ENCODE measurements at regions of chr19 and their contacts with region 1.

Region 1: DNA sequence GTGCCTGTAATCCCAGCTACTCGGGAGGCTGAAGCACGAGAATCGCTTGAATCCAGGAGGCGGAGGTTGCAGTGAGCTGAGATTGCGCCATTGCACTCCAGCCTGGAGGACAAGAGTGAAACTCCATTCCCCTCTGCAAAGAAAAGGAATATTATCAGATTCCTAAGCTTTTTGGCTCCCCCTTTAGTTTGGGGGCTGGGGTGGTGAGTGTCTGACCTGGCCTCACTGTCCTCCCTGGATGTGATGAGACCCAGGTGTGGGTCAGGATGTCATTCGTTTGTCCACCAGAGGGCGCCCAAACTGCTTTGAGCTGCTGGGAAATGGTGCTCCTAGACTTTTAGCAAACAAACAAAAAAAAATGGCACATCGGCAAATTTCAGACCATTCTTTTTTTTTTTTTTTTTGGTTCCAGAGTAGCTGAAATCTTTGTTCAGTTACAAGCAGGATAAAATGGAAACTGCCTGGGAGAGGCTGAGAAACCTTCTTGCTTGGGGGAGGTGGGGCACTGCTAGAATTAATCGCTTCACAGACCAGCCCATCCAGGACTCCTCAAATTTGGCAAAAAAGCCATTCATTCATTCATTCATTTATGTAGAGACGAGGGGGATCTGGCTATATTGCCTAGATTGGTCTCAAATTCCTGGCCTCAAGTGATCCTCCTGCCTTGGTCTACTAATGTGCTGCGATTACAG is 29.4 kb downstream of the SPC24 start:
- DNase-seq: peak; percentile 53 to 84 (median 64)
- H3K4me3 ChIP-seq: no peak overlapping the region
- H3K4me3 Mint-ChIP-seq: no peak overlapping the region
- H3K27ac ChIP-seq: no peak overlapping the region
- H3K27ac Mint-ChIP-seq: peak overlapping the region in 5 of 8 donors; percentile 31 to 54 (median 47)
- H3K4me1 ChIP-seq: peaks cover 3% of the 10 kb centered on the region
- H3K4me1 Mint-ChIP-seq: peaks cover 0 to 4% (median 1%) of the 10 kb centered on the region in 3 donors
- H3K27me3 ChIP-seq: no peaks in the 10 kb centered on the region
- H3K27me3 Mint-ChIP-seq: no peaks in the 10 kb centered on the region

Region 2: DNA sequence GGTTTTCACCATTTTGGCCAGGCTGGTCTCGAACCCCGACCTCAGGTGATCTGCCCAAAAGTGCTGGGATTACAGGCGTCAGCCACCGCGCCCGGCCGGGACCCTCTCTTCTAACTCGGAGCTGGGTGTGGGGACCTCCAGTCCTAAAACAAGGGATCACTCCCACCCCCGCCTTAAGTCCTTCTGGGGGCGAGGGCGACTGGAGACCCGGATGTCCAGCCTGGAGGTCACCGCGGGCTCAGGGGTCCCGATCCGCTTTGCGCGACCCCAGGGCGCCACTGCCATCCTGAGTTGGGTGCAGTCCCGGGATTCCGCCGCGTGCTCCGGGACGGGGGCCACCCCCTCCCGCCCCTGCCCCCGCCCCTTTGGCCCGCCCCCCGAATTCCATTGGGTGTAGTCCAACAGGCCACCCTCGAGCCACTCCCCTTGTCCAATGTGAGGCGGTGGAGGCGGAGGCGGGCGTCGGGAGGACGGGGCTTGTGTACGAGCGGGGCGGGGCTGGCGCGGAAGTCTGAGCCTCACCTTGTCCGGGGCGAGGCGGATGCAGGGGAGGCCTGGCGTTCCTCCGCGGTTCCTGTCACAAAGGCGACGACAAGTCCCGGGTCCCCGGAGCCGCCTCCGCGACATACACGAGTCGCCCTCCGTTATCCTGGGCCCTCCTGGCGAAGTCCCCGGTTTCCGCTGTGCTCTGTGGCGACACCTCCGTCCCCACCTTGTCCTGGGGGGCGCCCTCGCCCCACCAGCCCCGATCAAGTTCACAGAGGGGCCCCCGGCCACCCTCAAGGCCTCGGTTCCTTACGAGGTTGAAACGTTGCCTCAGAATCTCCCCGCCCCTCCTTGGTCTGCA is 35.9 kb before region 1 on chr19:
- CTCF ChIA-PET with region 1: interaction called, 15 read pairs
- POLR2A ChIA-PET with region 1: interaction called, 3 read pairs
- DNase-seq: peak; percentile 95 to 99 (median 96)
- H3K4me3 ChIP-seq: peak overlapping the region; percentile 78
- H3K4me3 Mint-ChIP-seq: peak overlapping the region; percentile 83 to 93 (median 87)
- H3K27ac ChIP-seq: peak overlapping the region; percentile 98
- H3K27ac Mint-ChIP-seq: peak overlapping the region; percentile 95 to 99 (median 99)
- H3K4me1 ChIP-seq: peaks cover 57% of the 10 kb centered on the region
- H3K4me1 Mint-ChIP-seq: peaks cover 39 to 58% (median 50%) of the 10 kb centered on the region in 3 donors
- H3K27me3 ChIP-seq: no peaks in the 10 kb centered on the region
- H3K27me3 Mint-ChIP-seq: no peaks in the 10 kb centered on the region

Region 3: GRCh38 chr19:11108746-11109145 is 17.4 kb before region 1 on chr19:
- CTCF ChIA-PET with region 1: interaction called, 13 read pairs
- POLR2A ChIA-PET with region 1: no interaction called
- DNase-seq: no peak
- H3K4me3 ChIP-seq: no peak overlapping the region
- H3K4me3 Mint-ChIP-seq: no peak overlapping the region
- H3K27ac ChIP-seq: no peak overlapping the region
- H3K27ac Mint-ChIP-seq: peak overlapping the region in 1 of 8 donors; percentile 57
- H3K4me1 ChIP-seq: no peaks in the 10 kb centered on the region
- H3K4me1 Mint-ChIP-seq: no peaks in the 10 kb centered on the region
- H3K27me3 ChIP-seq: no peaks in the 10 kb centered on the region
- H3K27me3 Mint-ChIP-seq: no peaks in the 10 kb centered on the region

Region 4: DNA sequence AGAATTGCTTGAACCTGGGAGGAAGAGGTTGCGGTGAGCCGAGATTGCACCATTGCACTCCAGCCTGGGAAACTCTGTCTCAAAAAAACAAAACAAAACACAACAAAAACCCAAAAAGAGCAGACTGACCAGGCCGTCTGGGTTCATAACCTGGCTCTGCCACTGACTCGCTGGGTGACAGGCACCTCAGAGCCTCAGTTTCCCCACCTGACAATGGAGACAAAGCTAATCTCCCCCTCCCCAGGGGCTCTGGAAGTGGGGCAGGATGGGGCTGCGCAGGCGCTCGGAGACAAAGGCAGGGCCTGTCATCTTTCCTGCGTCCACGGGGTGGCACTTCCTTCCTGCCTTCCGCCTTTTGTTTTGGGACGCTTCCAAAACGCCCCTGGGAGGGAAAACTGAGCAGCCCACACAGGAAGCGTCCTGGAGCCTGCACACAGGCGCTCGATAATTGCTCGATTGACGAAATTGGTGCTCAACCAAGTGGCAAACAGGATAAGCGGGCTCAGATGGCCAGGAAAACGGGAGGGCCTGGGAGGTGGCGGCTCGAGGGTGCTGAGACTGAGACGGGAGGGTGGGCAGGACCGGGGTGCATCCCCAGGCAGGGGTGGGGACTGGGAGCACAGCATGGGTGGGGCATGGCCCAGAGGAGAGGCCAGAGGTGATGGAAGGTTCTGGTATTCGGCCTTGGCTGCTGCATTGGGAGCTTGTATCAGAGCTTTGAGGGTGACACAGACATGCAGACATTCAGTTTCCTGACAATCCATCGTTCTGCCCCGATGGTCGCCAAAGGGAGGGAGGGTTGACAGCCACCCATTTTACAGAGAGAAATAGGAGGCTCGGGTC is 11.6 kb after region 1 on chr19:
- CTCF ChIA-PET with region 1: interaction called, 16 read pairs
- POLR2A ChIA-PET with region 1: no interaction called
- DNase-seq: peak; percentile 33 to 73 (median 47)
- H3K4me3 ChIP-seq: peak overlapping the region; percentile 61
- H3K4me3 Mint-ChIP-seq: peak overlapping the region; percentile 14 to 92 (median 85)
- H3K27ac ChIP-seq: no peak overlapping the region
- H3K27ac Mint-ChIP-seq: peak overlapping the region in 6 of 8 donors; percentile 23 to 89 (median 70)
- H3K4me1 ChIP-seq: peaks cover 13% of the 10 kb centered on the region
- H3K4me1 Mint-ChIP-seq: peaks cover 7 to 9% (median 9%) of the 10 kb centered on the region in 3 donors
- H3K27me3 ChIP-seq: no peaks in the 10 kb centered on the region
- H3K27me3 Mint-ChIP-seq: peaks cover 0 to 4% of the 10 kb centered on the region in 2 donors

Region 5: GRCh38 chr19:11182994-11183393 is 56.9 kb after region 1 on chr19:
- CTCF ChIA-PET with region 1: no interaction called
- POLR2A ChIA-PET with region 1: no interaction called
- DNase-seq: no peak
- H3K4me3 ChIP-seq: no peak overlapping the region
- H3K4me3 Mint-ChIP-seq: no peak overlapping the region
- H3K27ac ChIP-seq: no peak overlapping the region
- H3K27ac Mint-ChIP-seq: peak overlapping the region in 2 of 8 donors; percentile 8 to 28
- H3K4me1 ChIP-seq: no peaks in the 10 kb centered on the region
- H3K4me1 Mint-ChIP-seq: peaks cover 0 to 6% (median 4%) of the 10 kb centered on the region in 3 donors
- H3K27me3 ChIP-seq: no peaks in the 10 kb centered on the region
- H3K27me3 Mint-ChIP-seq: peaks cover under 1 to 7% of the 10 kb centered on the region in 2 donors

Measured in CD8-positive, alpha-beta memory T cell (primary cell).